ENCODE measurements at regions of chr4 and their contacts with region 1.

Region 1: GRCh38 chr4:165651901-165652300 is 221.1 kb upstream of the TLL1 start:
- DNase-seq: no peak
- H3K4me3 ChIP-seq: no peak overlapping the region
- H3K27ac ChIP-seq: no peak overlapping the region
- H3K4me1 ChIP-seq: no peaks in the 10 kb centered on the region
- H3K27me3 ChIP-seq: no peaks in the 10 kb centered on the region
- CTCF ChIP-seq: no peak

Region 2: DNA sequence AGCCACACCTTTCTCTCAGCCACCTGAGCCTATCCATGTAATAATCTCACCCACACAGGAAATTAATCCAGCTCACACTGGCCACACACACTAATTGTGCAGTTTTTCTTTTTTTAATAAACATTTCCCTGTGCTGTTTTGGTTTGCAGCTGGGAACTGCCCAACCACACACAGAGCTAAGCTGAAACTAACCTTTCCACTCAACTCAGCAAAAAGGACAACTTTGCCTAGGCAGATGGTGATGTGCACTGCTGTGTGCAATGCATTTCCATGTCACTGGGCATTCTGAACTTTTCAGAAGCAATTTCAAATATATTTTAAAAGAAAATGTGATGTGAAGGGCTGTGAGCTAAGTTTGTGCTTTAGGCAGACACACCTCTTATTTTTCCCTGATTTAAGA is 151.1 kb after region 1 on chr4:
- intact Hi-C with region 1: loop called (anchors 5 kb)
- DNase-seq: no peak
- H3K4me3 ChIP-seq: no peak overlapping the region
- H3K27ac ChIP-seq: no peak overlapping the region
- H3K4me1 ChIP-seq: no peaks in the 10 kb centered on the region
- H3K27me3 ChIP-seq: no peaks in the 10 kb centered on the region
- CTCF ChIP-seq: no peak